Sigmoid colon (tissue), 7 donors: ENCODE measurements at regions of chrX and their contacts with region 1.

Region 1: GRCh38 chrX:127519323-127519722 is 532.9 kb downstream of the ACTRT1 start:
- DNase-seq: no peak
- H3K4me3 ChIP-seq: no peak overlapping the region
- H3K27ac ChIP-seq: no peak overlapping the region
- H3K4me1 ChIP-seq: no peaks in the 10 kb centered on the region
- H3K27me3 ChIP-seq: no peaks in the 10 kb centered on the region
- CTCF ChIP-seq: no peak
- EP300 ChIP-seq: no peak
- POLR2A ChIP-seq: no peak

Region 2: GRCh38 chrX:127317144-127317543 is 202.2 kb before region 1 on chrX:
- intact Hi-C with region 1: no loop called
- DNase-seq: no peak
- H3K4me3 ChIP-seq: no peak overlapping the region
- H3K27ac ChIP-seq: no peak overlapping the region
- H3K4me1 ChIP-seq: no peaks in the 10 kb centered on the region
- H3K27me3 ChIP-seq: no peaks in the 10 kb centered on the region
- CTCF ChIP-seq: no peak
- EP300 ChIP-seq: no peak
- POLR2A ChIP-seq: no peak

Region 3: DNA sequence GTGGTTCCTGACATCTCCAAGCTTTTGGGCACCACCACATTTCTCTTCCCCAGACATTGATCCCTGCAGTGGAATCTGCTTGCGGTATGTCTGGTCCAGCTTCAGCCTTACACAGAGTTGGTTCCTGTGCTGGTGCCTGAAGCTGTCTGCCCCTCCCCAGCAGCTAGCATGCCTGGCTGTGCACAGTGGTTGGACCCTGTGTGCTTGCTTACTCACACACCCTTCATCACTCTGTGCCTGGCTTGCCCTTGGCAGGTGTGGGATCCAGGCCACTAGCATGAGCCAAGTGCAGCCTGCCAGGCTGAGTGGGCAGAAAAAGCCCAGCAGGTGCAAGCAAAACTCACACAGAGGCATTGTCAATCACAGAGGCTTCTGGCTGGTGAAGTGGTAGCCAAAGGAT is 59.1 kb after region 1 on chrX:
- intact Hi-C with region 1: loop called (anchors 10 kb)
- DNase-seq: no peak
- H3K4me3 ChIP-seq: no peak overlapping the region
- H3K27ac ChIP-seq: no peak overlapping the region
- H3K4me1 ChIP-seq: no peaks in the 10 kb centered on the region
- H3K27me3 ChIP-seq: no peaks in the 10 kb centered on the region
- CTCF ChIP-seq: no peak
- EP300 ChIP-seq: no peak
- POLR2A ChIP-seq: no peak